Body of pancreas (tissue), 4 donors: ENCODE measurements at regions of chr11 and their contacts with region 1.

Region 1: DNA sequence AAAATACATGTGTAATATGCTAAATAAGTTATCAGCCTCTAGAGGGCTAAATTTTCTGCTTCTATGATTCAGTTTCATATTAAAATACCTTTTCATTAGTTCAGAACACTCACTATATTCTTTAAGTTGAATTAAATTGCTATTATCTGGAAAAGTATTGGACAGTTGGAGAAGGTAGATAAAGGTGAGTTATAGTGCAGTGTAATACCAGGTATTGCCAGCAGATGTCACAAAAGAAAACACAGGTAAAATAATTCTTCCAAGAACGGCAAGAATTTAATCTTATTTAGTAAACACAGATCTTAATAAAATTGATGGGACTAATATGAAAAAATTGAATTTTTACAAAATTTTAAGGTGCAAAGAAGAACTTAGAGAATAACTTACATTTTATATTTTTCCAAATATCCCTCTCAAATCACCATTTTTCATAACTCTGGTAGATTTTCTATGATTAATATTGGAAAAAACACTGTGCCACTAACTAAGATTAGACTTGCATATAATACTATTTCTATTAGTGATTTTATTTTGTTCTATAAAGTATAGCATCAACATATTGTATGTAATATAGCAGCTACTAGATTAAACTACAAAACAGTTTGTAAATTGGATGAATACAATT is 1.7 kb upstream of the LRRC4C start:
- DNase-seq: no peak
- ATAC-seq: no peak
- H3K4me3 ChIP-seq: no peak overlapping the region
- H3K27ac ChIP-seq: no peak overlapping the region
- H3K4me1 ChIP-seq: peaks cover 6% of the 10 kb centered on the region
- H3K27me3 ChIP-seq: no peaks in the 10 kb centered on the region
- CTCF ChIP-seq: peak; percentile 61 to 92 (median 74)
- POLR2A ChIP-seq: no peak

Region 2: GRCh38 chr11:41301023-41301422 is 160.1 kb before region 1 on chr11:
- intact Hi-C with region 1: no loop called
- DNase-seq: no peak
- ATAC-seq: no peak
- H3K4me3 ChIP-seq: no peak overlapping the region
- H3K27ac ChIP-seq: no peak overlapping the region
- H3K4me1 ChIP-seq: no peaks in the 10 kb centered on the region
- H3K27me3 ChIP-seq: no peaks in the 10 kb centered on the region
- CTCF ChIP-seq: no peak
- POLR2A ChIP-seq: no peak

Region 3: GRCh38 chr11:42524534-42525227 is 1063.5 kb after region 1 on chr11:
- intact Hi-C with region 1: loop called (anchors 10 kb)
- DNase-seq: peak; percentile 42 to 65 (median 49)
- ATAC-seq: peak; percentile 83
- H3K4me3 ChIP-seq: no peak overlapping the region
- H3K27ac ChIP-seq: no peak overlapping the region
- H3K4me1 ChIP-seq: no peaks in the 10 kb centered on the region
- H3K27me3 ChIP-seq: no peaks in the 10 kb centered on the region
- CTCF ChIP-seq: peak; percentile 41 to 81 (median 73)
- POLR2A ChIP-seq: no peak